Calu3 (cell line): ENCODE measurements at regions of chr1 and their contacts with region 1.

Region 1: DNA sequence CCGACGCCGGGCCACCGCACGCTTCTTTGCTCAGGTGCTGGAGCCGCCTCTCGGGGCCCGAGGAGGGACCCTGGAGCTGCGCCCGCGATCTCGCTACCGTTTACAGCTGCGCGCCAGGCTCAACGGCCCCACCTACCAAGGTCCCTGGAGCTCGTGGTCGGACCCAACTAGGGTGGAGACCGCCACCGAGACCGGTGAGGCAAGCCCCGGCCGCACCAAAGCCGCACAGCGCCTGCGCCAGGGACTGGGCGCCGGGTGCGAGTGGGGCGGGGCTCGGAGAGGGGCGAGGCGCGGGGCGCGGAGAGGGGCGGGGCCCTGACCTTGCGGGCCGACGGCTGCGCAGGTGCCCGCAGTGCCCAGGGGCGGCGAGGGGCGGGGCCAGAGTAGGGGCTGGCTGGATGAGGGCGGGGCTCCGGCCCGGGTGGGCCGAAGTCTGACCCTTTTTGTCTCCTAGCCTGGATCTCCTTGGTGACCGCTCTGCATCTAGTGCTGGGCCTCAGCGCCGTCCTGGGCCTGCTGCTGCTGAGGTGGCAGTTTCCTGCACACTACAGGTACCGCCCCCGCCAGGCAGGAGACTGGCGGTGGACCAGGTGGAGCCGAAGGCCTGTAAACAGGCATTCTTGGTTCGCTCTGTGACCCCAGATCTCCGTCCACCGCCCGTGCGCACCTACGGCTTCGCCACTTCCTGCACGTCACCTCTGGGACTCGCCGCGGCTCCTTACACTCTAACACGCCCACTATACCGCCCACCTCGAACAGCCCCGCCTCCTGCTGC is 9.8 kb upstream of the CDC20 start:
- DNase-seq: peak; percentile 97
- H3K4me3 Mint-ChIP-seq: peak overlapping the region; percentile 87
- H3K27ac Mint-ChIP-seq: peak overlapping the region; percentile 79
- H3K4me1 Mint-ChIP-seq: peaks cover 54% of the 10 kb centered on the region
- H3K27me3 Mint-ChIP-seq: no peaks in the 10 kb centered on the region
- CTCF ChIP-seq: no peak

Region 2: GRCh38 chr1:43293896-43294760 is 54.9 kb before region 1 on chr1:
- CTCF ChIA-PET with region 1: no interaction called
- intact Hi-C with region 1: loop called (anchors 5 kb)
- DNase-seq: no peak
- H3K4me3 Mint-ChIP-seq: no peak overlapping the region
- H3K27ac Mint-ChIP-seq: no peak overlapping the region
- H3K4me1 Mint-ChIP-seq: no peaks in the 10 kb centered on the region
- H3K27me3 Mint-ChIP-seq: no peaks in the 10 kb centered on the region
- CTCF ChIP-seq: no peak